ENCODE measurements at regions of chr10 and their contacts with region 1.

Region 1: GRCh38 chr10:72048450-72049124 is 39.8 kb downstream of the SPOCK2 start:
- DNase-seq: peak; percentile 87
- CTCF ChIP-seq: peak; percentile 98

Region 2: GRCh38 chr10:71899665-71900412 is 148.7 kb before region 1 on chr10:
- in situ Hi-C with region 1: loop called (anchors 5 kb)
- DNase-seq: no peak
- CTCF ChIP-seq: no peak

Region 3: GRCh38 chr10:72297968-72298773 is 249.6 kb after region 1 on chr10:
- in situ Hi-C with region 1: no loop called
- DNase-seq: peak; percentile 92
- CTCF ChIP-seq: no peak

Measured in GM13977 (cell line).